Activated CD8-positive, alpha-beta memory T cell treated with anti-CD3 and anti-CD28 coated beads, Interleukin-2, amount 10 ng/mL, durations not matched to agents 7 days and 5 days (primary cell): ENCODE measurements at regions of chr1 and their contacts with region 1.

Region 1: DNA sequence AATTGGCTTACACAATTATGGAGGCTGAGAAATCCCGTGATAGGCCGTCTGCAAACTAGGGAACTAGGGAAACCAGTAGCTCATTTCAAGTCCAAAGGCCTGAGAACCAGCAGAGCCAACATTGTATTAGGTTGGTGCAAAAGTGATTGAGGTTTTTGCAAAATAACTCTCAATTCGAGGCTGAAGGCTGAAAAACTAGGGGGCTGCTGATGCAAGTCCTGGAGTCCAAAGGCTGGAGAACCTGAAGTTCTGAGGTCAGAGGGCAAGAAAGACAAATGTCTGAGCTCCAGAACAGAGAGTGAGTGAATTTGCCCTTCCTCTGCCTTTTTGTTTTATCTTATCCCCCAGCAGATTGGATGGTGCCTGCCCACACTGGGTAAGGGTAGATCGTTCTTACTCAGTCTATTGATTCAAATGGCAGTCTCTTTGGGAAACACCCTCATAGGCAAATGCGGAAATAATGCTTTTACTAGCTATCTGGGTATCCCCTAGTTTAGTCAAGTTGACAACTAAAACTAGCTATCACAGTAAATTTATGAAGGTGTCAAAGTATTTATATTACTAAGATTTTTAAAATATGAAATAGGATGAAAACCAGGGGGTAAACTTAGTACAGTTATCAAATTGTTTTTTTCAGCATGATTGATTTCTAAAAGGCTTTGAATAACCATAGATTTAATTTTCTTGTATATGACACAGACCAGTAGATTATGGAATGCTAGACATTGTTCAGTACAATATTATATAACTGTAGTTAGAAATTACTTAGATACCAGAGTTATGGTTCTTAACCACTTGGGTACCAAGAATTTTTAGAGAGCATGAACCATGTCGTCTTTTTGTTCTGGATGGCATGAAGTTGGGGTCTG is 15.4 kb downstream of the RABGAP1L start:
- DNase-seq: no peak
- ATAC-seq: peak; percentile 53
- H3K4me3 Mint-ChIP-seq: no peak overlapping the region
- H3K27ac Mint-ChIP-seq: no peak overlapping the region
- H3K4me1 Mint-ChIP-seq: peaks cover 23% of the 10 kb centered on the region
- H3K27me3 Mint-ChIP-seq: no peaks in the 10 kb centered on the region

Region 2: GRCh38 chr1:174191255-174191906 is 16.7 kb after region 1 on chr1:
- CTCF ChIA-PET with region 1: interaction called, 11 read pairs
- DNase-seq: no peak
- ATAC-seq: peak; percentile 76
- H3K4me3 Mint-ChIP-seq: no peak overlapping the region
- H3K27ac Mint-ChIP-seq: peak overlapping the region; percentile 19
- H3K4me1 Mint-ChIP-seq: peaks cover 36% of the 10 kb centered on the region
- H3K27me3 Mint-ChIP-seq: no peaks in the 10 kb centered on the region